Activated T-helper 1 cell treated with anti-CD3 and anti-CD28 coated beads, Interleukin-12 subunit alpha, Interleukin-12 subunit beta, Interleukin-2, Interleukin-4 antibody, amounts not matched to agents 30 ng/mL and 10 ng/mL and 1 ng/mL, durations not matched to agents 14 hours and 24 hours and 36 hours (primary cell): ENCODE measurements at regions of chr4 and their contacts with region 1.

Region 1: DNA sequence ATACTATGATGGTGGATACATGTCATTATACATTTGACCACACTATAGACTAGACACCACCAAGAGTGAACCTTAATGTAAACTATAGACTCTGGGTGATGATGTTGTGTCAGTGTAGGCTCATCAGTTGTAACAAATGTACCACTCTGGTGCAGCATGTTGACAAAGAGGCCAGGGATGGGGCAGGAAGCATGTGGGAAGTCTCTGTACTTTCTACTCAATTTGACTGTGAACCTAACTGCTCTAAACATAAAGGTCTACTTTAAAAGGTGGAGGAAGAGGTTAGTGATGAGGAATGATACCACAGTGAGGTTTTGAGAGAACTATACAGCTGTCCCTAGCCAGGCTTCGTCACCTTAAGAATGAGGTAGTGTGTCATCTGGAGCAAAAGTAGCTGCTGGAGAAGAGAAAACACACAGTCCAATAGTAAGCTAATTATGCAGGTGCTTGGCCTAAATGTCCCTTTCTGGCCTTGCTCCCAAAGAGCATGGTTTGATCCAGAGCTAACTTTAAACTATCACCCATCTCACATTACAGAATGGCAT is 38.4 kb downstream of the GRSF1 start:
- DNase-seq: peak; percentile 1
- H3K4me3 Mint-ChIP-seq: no peak overlapping the region
- H3K27ac Mint-ChIP-seq: peak overlapping the region; percentile 33
- H3K4me1 Mint-ChIP-seq: peaks cover 21% of the 10 kb centered on the region
- H3K27me3 Mint-ChIP-seq: no peaks in the 10 kb centered on the region

Region 2: GRCh38 chr4:70619288-70619687 is 182.0 kb before region 1 on chr4:
- intact Hi-C with region 1: loop called (anchors 5 kb)
- DNase-seq: no peak
- H3K4me3 Mint-ChIP-seq: no peak overlapping the region
- H3K27ac Mint-ChIP-seq: peak overlapping the region; percentile 3
- H3K4me1 Mint-ChIP-seq: peaks cover 8% of the 10 kb centered on the region
- H3K27me3 Mint-ChIP-seq: peaks cover 6% of the 10 kb centered on the region

Region 3: DNA sequence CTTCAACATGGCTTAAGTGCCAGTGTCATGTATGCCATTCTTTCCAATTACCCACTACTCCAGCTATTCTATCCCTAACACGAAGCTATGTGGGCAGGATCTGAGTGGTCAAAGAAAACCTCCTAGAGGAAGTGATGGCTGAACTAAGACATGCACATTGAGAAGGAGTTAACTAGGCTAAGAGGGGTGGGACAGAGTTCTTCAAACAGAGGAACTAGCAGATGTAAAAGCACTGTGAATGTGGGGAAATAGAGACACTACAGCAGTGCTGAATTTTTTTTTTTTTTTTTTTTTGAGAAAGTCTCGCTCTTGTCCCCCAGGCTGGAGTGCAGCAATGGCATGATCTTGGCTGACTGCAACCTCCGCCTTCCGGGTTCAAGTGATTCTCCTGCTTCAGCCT is 141.2 kb before region 1 on chr4:
- intact Hi-C with region 1: no loop called
- DNase-seq: no peak
- H3K4me3 Mint-ChIP-seq: no peak overlapping the region
- H3K27ac Mint-ChIP-seq: no peak overlapping the region
- H3K4me1 Mint-ChIP-seq: peaks cover 12% of the 10 kb centered on the region
- H3K27me3 Mint-ChIP-seq: peaks cover 8% of the 10 kb centered on the region

Region 4: DNA sequence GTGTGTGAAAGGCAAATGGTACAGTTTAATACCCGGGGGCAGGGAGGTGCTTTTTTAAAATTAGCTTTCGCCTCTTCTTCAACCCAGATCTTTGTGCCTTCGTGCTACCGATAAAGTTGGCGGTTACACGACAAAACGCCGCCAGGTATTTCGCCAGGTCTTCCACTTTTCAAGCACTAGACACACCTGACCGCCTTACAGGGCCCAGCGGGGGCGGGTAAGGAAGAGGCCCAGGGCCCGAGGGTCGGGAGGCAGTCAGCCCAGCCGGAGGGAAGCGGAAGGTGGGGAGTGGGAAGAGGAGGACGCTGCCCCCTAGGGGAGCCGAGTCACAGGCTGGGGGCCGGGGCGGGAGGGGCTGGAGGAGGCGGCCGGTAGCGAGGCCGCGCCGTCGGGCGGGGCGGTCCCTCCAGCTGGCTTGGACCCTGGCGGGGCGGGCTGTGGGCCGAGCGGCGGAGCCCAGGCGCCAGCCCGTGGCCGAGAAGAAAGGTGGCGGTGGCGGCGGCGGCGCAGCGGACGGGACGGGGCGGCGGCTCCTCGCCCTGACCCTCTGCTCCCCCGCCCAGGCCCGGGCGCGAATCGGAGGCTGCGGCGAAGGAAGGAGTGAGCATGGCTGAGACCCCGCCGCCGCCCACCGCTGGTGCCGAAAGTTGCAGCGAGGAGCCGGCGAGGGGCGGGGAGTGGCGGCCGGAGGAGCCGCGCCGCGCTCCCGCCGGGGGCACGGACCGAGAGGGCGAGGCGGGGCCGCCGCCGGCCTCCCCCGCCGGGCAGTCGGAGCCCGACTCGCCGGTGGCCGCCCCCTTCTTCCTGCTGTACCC is 96.8 kb before region 1 on chr4:
- intact Hi-C with region 1: loop called (anchors 1 kb)
- DNase-seq: peak; percentile 38
- H3K4me3 Mint-ChIP-seq: peak overlapping the region; percentile 76
- H3K27ac Mint-ChIP-seq: peak overlapping the region; percentile 83
- H3K4me1 Mint-ChIP-seq: peaks cover 24% of the 10 kb centered on the region
- H3K27me3 Mint-ChIP-seq: peaks cover 3% of the 10 kb centered on the region

Region 5: GRCh38 chr4:70734168-70734954 is 67.0 kb before region 1 on chr4:
- intact Hi-C with region 1: loop called (anchors 1 kb)
- DNase-seq: peak; percentile 29
- H3K4me3 Mint-ChIP-seq: peak overlapping the region; percentile 68
- H3K27ac Mint-ChIP-seq: peak overlapping the region; percentile 33
- H3K4me1 Mint-ChIP-seq: peaks cover 36% of the 10 kb centered on the region
- H3K27me3 Mint-ChIP-seq: no peaks in the 10 kb centered on the region

Region 6: DNA sequence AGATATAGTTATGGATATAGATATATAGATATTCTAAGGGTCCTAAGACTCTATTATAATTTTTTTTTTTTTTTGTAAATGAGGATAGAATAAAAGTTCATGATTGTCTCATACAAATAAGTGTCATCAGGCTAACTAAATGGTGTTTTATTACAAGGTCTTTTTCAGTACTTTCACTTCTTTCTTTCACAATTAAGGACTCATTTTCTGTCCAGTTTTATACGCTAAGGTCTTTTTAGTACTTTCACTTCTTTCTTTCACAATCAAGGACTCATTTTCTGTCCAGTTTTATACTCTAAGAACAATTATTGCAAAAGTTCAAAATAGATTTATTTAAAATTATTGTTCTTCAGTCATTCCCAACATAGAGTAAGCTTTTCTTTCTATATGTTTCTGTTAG is 46.9 kb before region 1 on chr4:
- intact Hi-C with region 1: loop called (anchors 5 kb)
- DNase-seq: no peak
- H3K4me3 Mint-ChIP-seq: no peak overlapping the region
- H3K27ac Mint-ChIP-seq: no peak overlapping the region
- H3K4me1 Mint-ChIP-seq: peaks cover 6% of the 10 kb centered on the region
- H3K27me3 Mint-ChIP-seq: peaks cover 1% of the 10 kb centered on the region

Region 7: DNA sequence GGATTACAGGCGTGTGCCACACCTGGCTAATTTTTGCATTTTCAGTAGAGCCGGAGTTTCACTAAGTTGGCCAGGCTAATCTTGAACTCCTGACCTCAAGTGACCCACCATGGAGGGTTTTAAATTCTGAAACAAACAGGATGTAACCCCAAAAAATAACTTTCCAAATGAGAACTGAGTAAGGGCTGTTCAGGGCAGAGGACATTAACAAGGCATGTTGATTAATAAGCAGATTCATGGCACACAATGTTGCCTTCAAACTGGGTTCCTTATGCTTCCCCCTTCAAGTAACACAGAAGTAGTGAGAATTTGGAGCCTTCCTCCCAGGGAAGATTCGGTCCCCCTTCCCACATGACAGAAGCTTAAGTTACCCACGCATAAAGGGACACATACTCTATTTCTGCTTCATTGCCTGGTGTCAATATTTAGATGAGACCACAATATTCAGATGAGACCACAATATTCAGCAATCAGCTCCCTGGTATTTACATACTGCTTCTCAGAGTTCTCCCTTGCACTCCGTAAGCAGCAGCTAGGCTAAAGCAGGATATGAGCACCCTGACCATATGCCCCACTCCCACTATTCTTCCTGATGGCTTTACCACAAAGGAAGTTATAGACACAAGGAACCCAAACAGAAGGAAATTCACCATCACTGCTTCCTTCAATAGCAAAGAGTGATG is 17.0 kb after region 1 on chr4:
- intact Hi-C with region 1: no loop called
- DNase-seq: no peak
- H3K4me3 Mint-ChIP-seq: no peak overlapping the region
- H3K27ac Mint-ChIP-seq: no peak overlapping the region
- H3K4me1 Mint-ChIP-seq: peaks cover 8% of the 10 kb centered on the region
- H3K27me3 Mint-ChIP-seq: no peaks in the 10 kb centered on the region

Region 8: GRCh38 chr4:70927502-70928137 is 126.3 kb after region 1 on chr4:
- intact Hi-C with region 1: loop called (anchors 1 kb)
- DNase-seq: peak; percentile 15
- H3K4me3 Mint-ChIP-seq: peak overlapping the region; percentile 11
- H3K27ac Mint-ChIP-seq: peak overlapping the region; percentile 76
- H3K4me1 Mint-ChIP-seq: peaks cover 31% of the 10 kb centered on the region
- H3K27me3 Mint-ChIP-seq: no peaks in the 10 kb centered on the region